Panc1 (cell line): ENCODE measurements at regions of chr1 and their contacts with region 1.

Region 1: GRCh38 chr1:7539769-7540175 is 231.3 kb upstream of the VAMP3 start:
- DNase-seq: no peak
- ATAC-seq: peak; percentile 57
- H3K4me3 ChIP-seq: no peak overlapping the region
- H3K27ac ChIP-seq: no peak overlapping the region
- H3K4me1 ChIP-seq: peaks cover 3% of the 10 kb centered on the region; the same call in 1 of the 2 replicates
- H3K27me3 ChIP-seq: no peaks in the 10 kb centered on the region
- CTCF ChIP-seq: peak; percentile 79

Region 2: DNA sequence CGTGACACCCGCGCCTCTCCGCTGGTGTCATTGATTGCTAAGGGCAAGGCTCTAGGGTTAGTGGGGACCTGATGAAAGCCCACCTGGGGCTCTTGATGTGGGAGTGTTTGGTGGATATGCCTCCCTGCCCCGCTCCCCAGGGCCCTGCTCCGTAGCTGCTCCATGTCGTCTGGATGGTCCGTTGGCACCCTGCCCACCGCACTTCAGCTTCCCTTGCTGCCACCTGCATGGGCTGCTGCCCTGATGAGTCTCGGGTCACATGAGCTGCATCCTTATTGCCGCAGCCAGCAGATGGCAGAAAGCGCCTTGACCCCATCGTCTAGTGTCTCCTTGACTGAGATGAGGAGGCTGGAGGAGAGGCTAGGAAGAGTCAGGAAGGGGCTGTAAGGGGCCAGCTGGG is 315.1 kb before region 1 on chr1:
- CTCF ChIA-PET with region 1: no interaction called
- POLR2A ChIA-PET with region 1: no interaction called
- in situ Hi-C with region 1: no loop called
- intact Hi-C with region 1: loop called (anchors 10 kb)
- DNase-seq: no peak
- ATAC-seq: no peak
- H3K4me3 ChIP-seq: no peak overlapping the region
- H3K27ac ChIP-seq: no peak overlapping the region
- H3K4me1 ChIP-seq: peaks cover 3% of the 10 kb centered on the region; the same call in 1 of the 2 replicates
- H3K27me3 ChIP-seq: no peaks in the 10 kb centered on the region
- CTCF ChIP-seq: no peak

Region 3: DNA sequence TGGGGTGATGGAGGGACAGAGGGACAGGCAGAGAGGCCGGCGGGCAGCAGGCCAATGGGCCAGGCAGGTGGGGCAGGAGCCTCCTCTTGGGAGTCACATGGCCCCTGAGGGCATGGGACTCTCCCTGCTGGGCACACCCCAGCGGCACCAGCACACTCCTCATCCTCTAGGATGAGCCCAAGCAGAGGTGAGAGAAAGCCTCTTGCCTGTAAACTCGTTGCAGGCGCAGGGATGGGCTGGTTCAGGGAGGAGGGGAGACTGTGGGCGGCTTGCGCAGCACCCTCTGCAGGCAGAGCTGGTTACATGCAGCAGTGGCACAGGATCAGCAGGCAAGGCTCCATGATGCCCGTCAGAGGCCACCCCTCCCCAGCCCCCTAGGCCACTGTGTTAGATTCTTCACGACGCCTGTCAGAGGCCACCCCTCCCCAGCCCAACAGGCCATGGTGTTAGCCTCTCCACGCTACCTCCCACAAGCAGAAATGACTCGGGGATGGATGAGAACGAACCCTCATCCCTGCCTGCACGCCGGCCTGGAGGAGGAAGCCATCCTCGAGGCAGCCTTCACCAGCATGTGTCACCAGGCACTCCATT is 21.7 kb after region 1 on chr1:
- CTCF ChIA-PET with region 1: no interaction called
- POLR2A ChIA-PET with region 1: no interaction called
- in situ Hi-C with region 1: no loop called
- intact Hi-C with region 1: no loop called
- DNase-seq: no peak
- ATAC-seq: peak; percentile 67; the same call in 1 of the 2 replicates
- H3K4me3 ChIP-seq: no peak overlapping the region
- H3K27ac ChIP-seq: no peak overlapping the region
- H3K4me1 ChIP-seq: no peaks in the 10 kb centered on the region
- H3K27me3 ChIP-seq: no peaks in the 10 kb centered on the region
- CTCF ChIP-seq: no peak; the same call in 1 of the 2 replicates